ENCODE measurements at regions of chr19 and their contacts with region 1.

Region 1: DNA sequence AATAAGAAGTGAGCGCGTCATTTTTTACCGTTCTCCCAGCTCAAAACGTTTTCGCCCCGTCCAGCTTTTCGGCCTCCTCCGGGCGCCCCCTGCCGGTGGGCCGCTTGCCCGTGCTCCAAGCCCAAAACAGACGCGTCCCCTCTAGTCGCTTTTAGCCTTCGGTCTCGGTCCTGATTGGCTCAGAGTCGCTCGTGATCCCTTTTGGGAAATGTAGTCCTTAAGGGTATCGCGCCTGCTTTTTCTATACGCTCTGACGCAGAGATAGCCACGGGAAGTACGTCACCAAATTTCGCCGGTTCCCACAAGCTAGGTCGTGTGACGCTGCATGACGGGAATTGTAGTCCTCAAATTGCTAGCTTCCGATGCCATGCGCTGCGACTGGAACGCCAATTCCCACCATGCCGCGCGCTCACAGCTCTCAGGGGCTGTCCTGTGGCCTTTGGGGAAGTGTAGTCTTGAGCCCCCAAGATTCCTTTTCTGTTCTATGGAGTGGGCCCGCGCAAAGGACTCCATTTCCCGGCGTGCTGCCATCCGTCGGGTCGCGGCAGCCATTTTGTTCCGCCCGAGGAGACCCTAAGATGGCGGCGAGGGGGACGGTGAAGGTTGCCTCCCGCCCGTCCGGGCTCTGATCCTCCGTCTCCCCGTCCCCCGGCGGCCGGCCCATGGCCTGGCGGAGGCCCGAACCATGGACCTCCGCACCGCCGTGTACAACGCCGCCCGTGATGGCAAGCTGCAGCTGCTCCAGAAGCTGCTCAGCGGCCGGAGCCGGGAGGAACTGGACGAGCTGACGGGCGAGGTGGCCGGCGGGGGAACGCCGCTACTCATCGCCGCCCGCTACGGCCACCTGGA is at the start of gene FEM1A:
- DNase-seq: peak; percentile 99 to 100 (median 100)

Region 2: DNA sequence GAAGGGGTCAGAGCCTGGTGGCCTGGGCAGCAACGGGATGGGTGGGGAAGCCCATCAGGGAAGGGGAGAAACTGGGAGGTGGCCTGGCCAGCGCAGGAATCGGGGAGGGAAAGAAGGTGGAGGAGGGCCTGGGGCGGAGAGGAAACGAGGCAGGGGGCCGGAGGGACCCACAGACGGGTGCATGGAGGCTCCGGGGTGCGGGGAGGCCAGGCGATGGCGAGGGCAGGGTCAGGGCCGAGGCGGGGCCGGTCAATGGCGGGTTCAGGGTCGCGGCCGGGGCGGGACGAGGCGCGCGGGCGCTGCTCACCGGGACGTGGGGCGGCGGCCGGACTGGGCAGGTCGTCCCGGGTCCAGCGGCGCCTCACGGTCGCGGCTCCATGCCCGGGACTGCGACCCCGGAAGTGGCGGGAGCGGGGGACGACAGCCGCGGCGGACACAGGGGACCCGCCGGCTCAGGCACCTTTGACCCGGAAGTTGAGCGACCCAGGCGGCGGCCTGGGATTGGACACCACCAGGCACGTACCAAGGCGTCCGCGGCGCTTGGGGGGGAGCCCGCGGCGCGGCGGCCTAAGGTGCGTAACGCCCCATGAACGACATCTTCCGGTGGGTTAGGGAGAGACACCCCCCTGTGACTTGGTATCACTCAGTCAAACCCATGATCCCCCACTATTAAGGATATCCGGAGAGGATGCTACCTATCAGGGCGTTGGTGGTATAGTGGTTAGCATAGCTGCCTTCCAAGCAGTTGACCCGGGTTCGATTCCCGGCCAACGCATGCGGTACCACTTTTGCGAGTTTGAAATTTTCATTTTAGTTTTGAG is 67.8 kb before region 1 on chr19 and contains the start of gene DPP9:
- intact Hi-C with region 1: loop called (anchors 2 kb)
- DNase-seq: peak; percentile 89 to 100 (median 95)

Region 3: DNA sequence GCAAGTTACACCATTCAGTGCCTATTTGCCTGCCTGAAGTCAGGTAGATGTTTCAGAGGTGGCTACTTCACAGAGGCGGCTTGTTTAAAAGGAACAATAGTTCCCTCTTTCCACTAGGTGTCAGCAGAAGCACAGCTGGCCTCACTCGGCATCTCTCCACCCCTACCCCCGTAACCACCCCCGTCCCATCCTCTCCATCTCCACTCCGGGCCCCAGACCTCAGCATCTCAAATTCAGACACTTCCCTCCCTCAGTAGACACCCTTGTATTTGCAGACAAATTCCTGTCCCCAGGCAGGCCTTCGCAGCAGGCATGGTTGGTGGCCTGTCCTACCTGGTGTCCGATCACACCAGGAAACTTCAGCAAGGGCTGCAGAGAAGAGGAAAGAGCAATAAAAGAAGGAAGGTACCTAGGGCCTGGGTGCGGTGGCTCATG is 58.7 kb before region 1 on chr19:
- intact Hi-C with region 1: loop called (anchors 1 kb)
- DNase-seq: peak in 9 of 10 donors; percentile 36 to 93 (median 56)

Measured in posterior cingulate gyrus (tissue), 11 donors.